Activated CD4-positive, alpha-beta memory T cell treated with anti-CD3 and anti-CD28 coated beads for 36 hours (primary cell): ENCODE measurements at regions of chr3 and their contacts with region 1.

Region 1: DNA sequence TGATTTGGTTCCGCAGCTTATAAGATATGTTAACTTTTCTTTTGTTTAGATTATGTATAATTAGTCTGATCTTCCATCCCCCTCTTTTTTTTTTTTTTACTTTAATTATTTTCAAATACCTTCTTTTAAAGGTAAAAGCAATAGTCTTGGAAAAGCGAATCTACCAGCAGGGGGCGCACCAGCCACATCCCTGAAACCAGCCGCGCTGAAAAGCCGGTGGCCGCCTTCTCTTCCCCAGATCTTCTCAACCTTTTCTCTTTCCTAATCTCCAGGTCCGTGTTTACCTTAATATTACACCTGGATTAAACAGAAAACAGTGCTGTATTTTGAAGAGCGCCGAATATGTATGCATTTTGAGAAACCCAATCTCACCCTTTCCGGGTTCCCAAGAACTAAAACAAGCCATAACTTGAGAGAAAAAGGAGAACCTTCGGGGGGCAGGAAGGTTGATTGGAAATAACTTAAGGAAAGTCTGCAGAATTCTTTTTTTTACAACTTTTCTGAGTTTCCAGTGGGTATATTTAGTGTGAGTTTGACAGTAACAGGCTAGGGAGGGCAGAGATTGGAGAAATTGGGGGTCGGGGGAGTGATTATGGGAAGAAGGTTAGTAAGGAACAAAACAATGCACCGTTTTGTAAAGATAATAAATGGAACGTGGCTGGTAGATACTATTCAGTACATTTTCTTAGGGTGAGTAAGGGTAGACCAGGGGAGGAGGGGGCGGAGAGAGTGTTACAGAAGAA is 2.0 kb upstream of the SOX2 start:
- DNase-seq: peak; percentile 72
- H3K4me3 Mint-ChIP-seq: no peak overlapping the region
- H3K27ac Mint-ChIP-seq: peak overlapping the region; percentile 40
- H3K4me1 Mint-ChIP-seq: peaks cover 10% of the 10 kb centered on the region
- H3K27me3 Mint-ChIP-seq: peaks cover 53% of the 10 kb centered on the region

Region 2: DNA sequence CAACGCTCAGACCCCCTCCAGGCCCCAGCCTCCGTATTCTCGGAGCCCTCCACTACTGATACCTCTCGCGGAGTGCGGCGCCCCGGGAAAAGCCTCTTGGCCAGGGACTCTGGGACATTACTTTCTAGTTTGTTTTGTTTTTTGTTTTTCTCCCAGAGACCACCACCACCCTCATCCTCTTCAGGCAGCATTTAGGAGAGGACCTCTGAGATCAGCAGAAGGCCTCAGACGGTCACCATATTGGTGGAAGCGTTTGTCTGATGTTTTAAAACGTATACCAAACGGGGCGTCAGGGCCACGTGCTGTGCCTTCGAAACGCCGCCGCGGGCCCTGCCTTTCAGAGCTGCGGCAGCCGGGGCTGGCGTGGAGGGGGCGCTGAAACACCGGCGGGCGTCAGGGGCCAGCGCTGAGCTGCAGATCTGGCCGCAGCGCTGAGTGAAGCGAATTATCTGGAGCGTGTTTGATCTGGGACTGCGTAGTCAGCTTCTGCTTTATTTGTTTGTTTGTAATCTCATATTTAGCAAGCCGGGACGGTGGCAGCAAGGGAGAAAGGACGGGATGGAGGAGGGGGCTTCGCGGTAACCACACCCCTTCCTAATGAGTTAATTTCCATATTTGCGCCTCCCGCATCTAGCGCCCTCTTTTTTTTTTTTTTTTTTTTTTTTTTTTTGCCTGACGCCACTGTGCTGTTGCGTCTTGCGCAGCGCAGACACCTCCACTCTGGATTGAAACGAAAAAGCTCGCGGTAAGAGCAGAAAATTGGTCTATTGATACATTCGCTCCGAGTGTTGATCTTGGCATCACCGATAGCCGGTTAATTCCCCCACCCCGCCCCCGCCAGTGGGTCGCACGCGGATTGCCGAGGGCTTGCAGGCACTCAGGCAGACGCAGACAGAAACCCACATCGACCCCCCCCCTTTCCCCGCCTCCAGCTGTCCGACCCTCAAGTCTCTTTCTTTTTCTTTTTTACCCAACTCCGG is 16.9 kb after region 1 on chr3:
- CTCF ChIA-PET with region 1: interaction called, 4 read pairs
- POLR2A ChIA-PET with region 1: no interaction called
- intact Hi-C with region 1: loop called (anchors 2 kb)
- DNase-seq: no peak
- H3K4me3 Mint-ChIP-seq: peak overlapping the region; percentile 41
- H3K27ac Mint-ChIP-seq: peak overlapping the region; percentile 33
- H3K4me1 Mint-ChIP-seq: peaks cover 15% of the 10 kb centered on the region
- H3K27me3 Mint-ChIP-seq: peaks cover 89% of the 10 kb centered on the region

Region 3: DNA sequence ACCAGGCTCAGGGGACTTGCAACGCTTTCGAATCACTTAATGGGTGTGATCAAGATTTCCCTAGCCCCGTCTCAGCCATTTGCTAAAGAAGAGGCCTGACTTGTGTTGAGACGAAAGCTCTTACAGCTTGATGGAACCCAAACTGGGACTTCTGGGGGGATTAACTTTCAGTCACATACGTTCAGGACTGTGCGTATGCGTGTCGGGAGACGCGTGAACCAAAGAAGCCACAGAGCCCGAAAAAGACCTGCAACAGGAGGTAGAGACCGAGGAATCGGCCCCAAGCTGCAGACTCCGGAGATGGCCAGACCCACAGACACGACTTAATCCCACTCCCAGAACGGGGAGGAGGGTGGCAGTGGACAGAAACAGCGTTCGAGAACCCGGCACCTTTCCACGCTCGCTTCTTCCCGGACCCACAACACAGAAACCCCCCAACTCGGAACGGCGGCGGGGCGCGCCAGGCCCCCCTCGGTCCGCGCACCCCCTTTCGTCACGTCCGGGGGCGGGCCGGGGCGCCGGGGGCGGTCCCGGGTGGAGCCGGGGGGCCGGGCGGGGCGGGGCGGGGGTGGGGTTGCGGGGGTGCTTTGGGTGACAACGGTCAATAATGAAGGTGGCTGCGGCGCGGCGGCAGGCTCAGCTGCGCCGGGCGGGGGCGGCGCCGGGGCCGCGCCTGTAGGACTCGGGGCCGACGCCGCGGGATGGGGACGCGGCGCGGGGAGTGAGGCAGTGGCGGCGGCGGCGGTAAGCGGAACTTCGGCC is 1083.4 kb after region 1 on chr3 and contains the start of gene ATP11B:
- CTCF ChIA-PET with region 1: no interaction called
- POLR2A ChIA-PET with region 1: no interaction called
- intact Hi-C with region 1: loop called (anchors 10 kb)
- DNase-seq: peak; percentile 82
- H3K4me3 Mint-ChIP-seq: peak within 1 kb of the TSS; percentile 93
- H3K27ac Mint-ChIP-seq: peak within 1 kb of the TSS; percentile 94
- H3K4me1 Mint-ChIP-seq: peaks cover 24% of the 10 kb centered on the region
- H3K27me3 Mint-ChIP-seq: peaks cover 2% of the 10 kb centered on the region
- total RNA-seq, gene ATP11B: 93.9 to 96.0 TPM